ENCODE measurements at regions of chr9 and their contacts with region 1.

Region 1: DNA sequence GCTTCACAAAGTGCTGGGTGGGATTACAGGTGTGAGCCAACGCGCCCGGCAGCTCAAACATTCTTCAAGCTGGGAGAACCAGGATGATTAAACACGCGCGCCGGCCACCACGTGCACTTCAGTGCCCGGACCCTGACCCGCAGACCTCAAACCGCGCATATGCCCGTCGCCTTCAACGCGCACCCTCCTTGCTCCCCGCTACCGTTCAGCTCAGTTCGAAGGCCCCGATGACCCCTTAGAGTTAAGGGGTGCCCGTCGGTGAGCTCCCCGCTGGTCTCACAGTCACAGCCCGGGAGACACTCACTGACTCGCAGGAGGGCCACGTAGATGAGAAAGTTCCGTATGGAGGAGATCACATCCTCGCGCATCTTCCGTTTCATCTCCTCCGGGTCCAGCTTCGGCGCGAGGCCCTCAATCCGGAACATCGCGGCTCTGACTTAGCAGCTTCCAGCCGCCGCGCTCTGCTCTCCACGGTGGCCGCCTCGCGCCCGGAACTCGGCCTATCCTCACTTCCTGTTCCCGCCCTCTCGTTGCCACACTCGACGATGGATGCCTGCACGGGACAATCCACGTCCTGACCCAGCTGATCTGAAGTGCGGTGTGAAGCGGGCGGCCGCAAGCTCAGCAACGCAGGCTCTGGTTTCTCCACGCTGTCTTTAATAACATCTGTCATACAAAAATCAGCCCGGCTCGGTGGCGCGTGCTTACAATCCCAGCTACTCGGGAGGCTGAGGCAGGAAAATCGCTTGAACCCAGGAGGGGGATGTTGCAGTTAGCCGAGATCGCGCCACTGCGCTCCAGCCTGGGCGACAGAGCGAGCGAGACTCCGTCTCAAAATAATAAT is at the start of gene TOMM5:
- DNase-seq: peak; percentile 55
- H3K4me3 ChIP-seq: peak within 1 kb of the TSS; percentile 99
- CTCF ChIP-seq: no peak

Region 2: GRCh38 chr9:37575921-37576721 is 16.2 kb before region 1 on chr9 and contains the start of gene FBXO10:
- CTCF ChIA-PET with region 1: interaction called, 34 read pairs
- POLR2A ChIA-PET with region 1: interaction called, 8 read pairs
- DNase-seq: no peak
- H3K4me3 ChIP-seq: peak within 1 kb of the TSS; percentile 75
- CTCF ChIP-seq: no peak

Measured in AG04449 (cell line).